Right cardiac atrium (tissue), 5 donors: ENCODE measurements at regions of chr11 and their contacts with region 1.

Region 1: GRCh38 chr11:34357701-34358257 is at the start of gene ABTB2:
- DNase-seq: peak; percentile 99 to 100 (median 99)
- ATAC-seq: peak; percentile 96 to 97
- H3K4me3 ChIP-seq: peak within 1 kb of the TSS; percentile 61
- H3K27ac ChIP-seq: peak within 1 kb of the TSS; percentile 73
- H3K4me1 ChIP-seq: peaks cover 9% of the 10 kb centered on the region
- H3K27me3 ChIP-seq: no peaks in the 10 kb centered on the region
- total RNA-seq, gene ABTB2: 8.5 to 14.1 (median 12.4) TPM

Region 2: DNA sequence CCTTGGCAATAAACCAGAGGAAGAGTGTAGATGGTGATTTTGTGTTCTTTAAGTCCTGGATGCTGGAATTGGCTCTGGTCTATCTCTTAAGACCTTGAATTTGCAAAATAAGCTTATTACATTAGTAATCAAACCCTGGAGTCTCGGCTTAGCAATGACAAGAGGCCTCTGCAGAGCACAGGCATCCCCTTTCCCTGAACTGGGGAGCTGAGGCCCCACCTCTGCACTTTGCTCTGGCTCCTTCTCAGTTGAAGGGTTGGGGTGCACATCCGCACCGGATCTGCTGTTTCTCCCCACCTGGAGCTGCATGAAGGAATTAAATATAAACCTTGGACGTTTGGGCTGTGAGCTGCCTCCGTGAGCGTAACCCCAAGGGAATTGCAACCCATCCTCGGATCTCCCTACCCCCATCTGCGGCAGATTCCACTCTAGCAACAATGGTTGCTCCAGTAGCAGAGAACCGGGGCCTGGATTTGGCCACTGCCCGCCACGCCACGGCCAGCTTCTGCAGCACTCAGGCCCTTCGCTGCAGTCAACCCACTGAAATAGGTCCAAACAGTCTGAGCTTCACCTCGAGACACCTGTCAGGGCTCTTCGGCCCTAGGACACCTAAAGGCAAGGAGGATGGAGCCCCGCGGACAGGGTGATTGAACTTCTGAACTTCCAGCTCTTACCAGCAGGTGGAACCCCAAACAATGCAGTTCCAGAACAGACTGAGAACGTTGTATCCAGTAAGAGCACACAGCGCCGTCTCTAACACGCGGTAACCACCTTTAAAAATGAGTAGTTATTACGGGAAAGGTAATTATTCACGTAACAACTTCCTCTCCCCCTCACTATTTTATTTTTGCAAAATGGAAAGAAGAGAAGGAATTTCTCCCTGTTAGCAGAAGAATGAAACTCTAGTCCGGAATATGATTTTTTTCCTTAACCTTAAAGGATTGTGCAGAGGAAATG is 361.0 kb before region 1 on chr11:
- intact Hi-C with region 1: loop called in 3 of 4 experiments (anchors 5 kb)
- DNase-seq: peak; percentile 50 to 71 (median 53)
- ATAC-seq: peak; percentile 94 to 96
- H3K4me3 ChIP-seq: no peak overlapping the region
- H3K27ac ChIP-seq: no peak overlapping the region
- H3K4me1 ChIP-seq: peaks cover 2% of the 10 kb centered on the region
- H3K27me3 ChIP-seq: no peaks in the 10 kb centered on the region

Region 3: GRCh38 chr11:34174412-34175041 is 183.3 kb before region 1 on chr11:
- intact Hi-C with region 1: loop called (anchors 2 to 5 kb)
- DNase-seq: peak; percentile 87 to 96 (median 95)
- ATAC-seq: peak; percentile 97 to 98
- H3K4me3 ChIP-seq: no peak overlapping the region
- H3K27ac ChIP-seq: no peak overlapping the region
- H3K4me1 ChIP-seq: peaks cover 6% of the 10 kb centered on the region
- H3K27me3 ChIP-seq: no peaks in the 10 kb centered on the region

Region 4: GRCh38 chr11:34243726-34244464 is 113.9 kb before region 1 on chr11:
- intact Hi-C with region 1: loop called in 1 of 4 experiments (anchors 10 kb)
- DNase-seq: no peak
- ATAC-seq: peak; percentile 69 to 71
- H3K4me3 ChIP-seq: no peak overlapping the region
- H3K27ac ChIP-seq: peak overlapping the region; percentile 38
- H3K4me1 ChIP-seq: peaks cover 13% of the 10 kb centered on the region
- H3K27me3 ChIP-seq: no peaks in the 10 kb centered on the region

Region 5: DNA sequence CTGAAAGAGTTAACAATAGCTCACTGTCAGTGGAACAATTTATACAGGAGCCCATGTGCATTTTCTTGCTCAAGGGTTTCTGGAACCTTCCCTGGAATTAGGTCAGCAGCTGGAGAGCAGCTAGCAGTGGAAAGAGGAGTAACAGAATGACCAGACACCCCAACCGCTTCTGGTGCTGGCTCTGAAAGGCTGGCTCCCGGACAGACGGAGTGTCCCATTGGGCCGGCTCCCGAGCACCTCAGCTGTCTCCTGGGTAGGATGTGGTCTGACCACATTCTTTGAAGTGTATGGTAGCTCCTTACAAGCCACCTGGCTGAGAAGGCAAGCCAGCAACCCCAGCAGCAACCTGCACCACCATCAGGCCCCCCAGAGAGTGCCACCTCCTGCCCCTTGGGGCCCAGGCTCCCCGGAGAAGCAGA is 44.7 kb before region 1 on chr11:
- intact Hi-C with region 1: loop called in 1 of 4 experiments (anchors 5 kb)
- DNase-seq: peak in 1 of 3 donors; percentile 28
- ATAC-seq: peak in 1 of 2 donors; percentile 25
- H3K4me3 ChIP-seq: no peak overlapping the region
- H3K27ac ChIP-seq: no peak overlapping the region
- H3K4me1 ChIP-seq: peaks cover 14% of the 10 kb centered on the region
- H3K27me3 ChIP-seq: no peaks in the 10 kb centered on the region

Region 6: DNA sequence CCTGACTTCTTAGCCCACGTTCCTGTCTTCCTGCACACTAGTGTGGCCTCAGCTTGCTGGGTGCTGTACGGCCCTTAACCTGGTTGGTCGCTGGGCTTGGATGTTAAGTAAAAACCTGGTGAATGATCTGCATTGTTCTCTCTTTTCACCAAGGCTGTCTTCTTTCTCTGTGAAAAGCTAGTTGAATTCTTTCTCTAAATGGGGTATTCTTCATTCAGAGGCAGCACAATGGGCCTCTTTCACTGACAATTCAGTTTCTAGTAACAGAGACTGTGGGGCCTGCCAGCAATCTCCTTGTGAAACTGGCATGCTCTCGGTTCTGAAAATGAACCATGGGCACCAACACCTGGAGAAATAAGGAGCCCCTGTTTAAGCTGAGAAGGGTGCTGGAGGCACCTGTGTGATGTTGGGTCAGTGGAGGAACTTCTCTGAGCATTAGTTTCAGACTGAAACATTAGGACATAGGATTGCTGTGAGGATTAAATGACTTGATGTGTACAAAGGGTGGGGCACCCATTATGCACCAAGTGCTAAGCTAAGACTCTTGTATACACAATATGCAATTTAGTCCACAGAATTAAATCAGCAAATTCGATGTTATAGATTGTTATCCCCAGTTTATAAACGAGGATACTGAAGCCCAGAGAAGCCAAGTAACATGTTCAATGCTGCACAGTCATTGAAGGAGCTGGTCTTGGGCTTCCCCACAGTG is 188.9 kb after region 1 on chr11:
- intact Hi-C with region 1: no loop called
- DNase-seq: no peak
- ATAC-seq: no peak
- H3K4me3 ChIP-seq: no peak overlapping the region
- H3K27ac ChIP-seq: no peak overlapping the region
- H3K4me1 ChIP-seq: no peaks in the 10 kb centered on the region
- H3K27me3 ChIP-seq: no peaks in the 10 kb centered on the region